ENCODE measurements at regions of chr5 and their contacts with region 1.

Region 1: GRCh38 chr5:69166686-69167492 is at the start of gene CCNB1:
- DNase-seq: peak; percentile 93 to 98 (median 96)
- ATAC-seq: peak; percentile 100
- H3K4me3 ChIP-seq: peak within 1 kb of the TSS; percentile 84 to 87
- H3K4me3 Mint-ChIP-seq: peak within 1 kb of the TSS; percentile 94
- H3K27ac ChIP-seq: peak within 1 kb of the TSS; percentile 50 to 61
- H3K27ac Mint-ChIP-seq: peak within 1 kb of the TSS; percentile 84
- H3K4me1 ChIP-seq: peaks cover 9% of the 10 kb centered on the region
- H3K4me1 Mint-ChIP-seq: peaks cover 27% of the 10 kb centered on the region
- H3K27me3 ChIP-seq: no peaks in the 10 kb centered on the region
- H3K27me3 Mint-ChIP-seq: no peaks in the 10 kb centered on the region
- CTCF ChIP-seq: no peak
- total RNA-seq, gene CCNB1: 0.75 to 0.95 TPM

Region 2: GRCh38 chr5:69042915-69043658 is 123.8 kb before region 1 on chr5:
- CTCF ChIA-PET with region 1: no interaction called
- POLR2A ChIA-PET with region 1: no interaction called
- intact Hi-C with region 1: loop called (anchors 2 to 5 kb)
- DNase-seq: peak; percentile 50 to 95 (median 78)
- ATAC-seq: peak; percentile 97
- H3K4me3 ChIP-seq: peak overlapping the region; percentile 54 to 64
- H3K4me3 Mint-ChIP-seq: peak overlapping the region; percentile 89
- H3K27ac ChIP-seq: peak overlapping the region; percentile 69 to 81
- H3K27ac Mint-ChIP-seq: peak overlapping the region; percentile 95
- H3K4me1 ChIP-seq: peaks cover 3% of the 10 kb centered on the region
- H3K4me1 Mint-ChIP-seq: peaks cover 11% of the 10 kb centered on the region
- H3K27me3 ChIP-seq: no peaks in the 10 kb centered on the region
- H3K27me3 Mint-ChIP-seq: no peaks in the 10 kb centered on the region
- CTCF ChIP-seq: peak; percentile 88

Region 3: GRCh38 chr5:69152731-69153130 is 14.2 kb before region 1 on chr5:
- CTCF ChIA-PET with region 1: no interaction called
- POLR2A ChIA-PET with region 1: no interaction called
- intact Hi-C with region 1: no loop called
- DNase-seq: no peak
- ATAC-seq: no peak
- H3K4me3 ChIP-seq: no peak overlapping the region
- H3K4me3 Mint-ChIP-seq: no peak overlapping the region
- H3K27ac ChIP-seq: no peak overlapping the region
- H3K27ac Mint-ChIP-seq: no peak overlapping the region
- H3K4me1 ChIP-seq: no peaks in the 10 kb centered on the region
- H3K4me1 Mint-ChIP-seq: no peaks in the 10 kb centered on the region
- H3K27me3 ChIP-seq: no peaks in the 10 kb centered on the region
- H3K27me3 Mint-ChIP-seq: no peaks in the 10 kb centered on the region
- CTCF ChIP-seq: no peak

Region 4: GRCh38 chr5:69189162-69190086 is 22.5 kb after region 1 on chr5 and contains the start of gene CENPH:
- CTCF ChIA-PET with region 1: no interaction called
- POLR2A ChIA-PET with region 1: no interaction called
- intact Hi-C with region 1: loop called (anchors 1 kb)
- DNase-seq: peak; percentile 82 to 93 (median 90)
- ATAC-seq: peak; percentile 94
- H3K4me3 ChIP-seq: peak within 1 kb of the TSS; percentile 75 to 77
- H3K4me3 Mint-ChIP-seq: peak within 1 kb of the TSS; percentile 91
- H3K27ac ChIP-seq: peak within 1 kb of the TSS; percentile 66 to 73
- H3K27ac Mint-ChIP-seq: peak within 1 kb of the TSS; percentile 84
- H3K4me1 ChIP-seq: peaks cover 10% of the 10 kb centered on the region
- H3K4me1 Mint-ChIP-seq: peaks cover 16% of the 10 kb centered on the region
- H3K27me3 ChIP-seq: no peaks in the 10 kb centered on the region
- H3K27me3 Mint-ChIP-seq: no peaks in the 10 kb centered on the region
- CTCF ChIP-seq: no peak
- total RNA-seq, gene CENPH: 4.1 to 4.6 TPM

Measured in CD8-positive, alpha-beta T cell (primary cell).